Right ventricle myocardium inferior (tissue), 1 donor: ENCODE measurements at regions of chr12 and their contacts with region 1.

Region 1: GRCh38 chr12:51814311-51815088 is 34.0 kb downstream of the FIGNL2 start:
- DNase-seq: peak; percentile 93
- ATAC-seq: peak; percentile 88

Region 2: DNA sequence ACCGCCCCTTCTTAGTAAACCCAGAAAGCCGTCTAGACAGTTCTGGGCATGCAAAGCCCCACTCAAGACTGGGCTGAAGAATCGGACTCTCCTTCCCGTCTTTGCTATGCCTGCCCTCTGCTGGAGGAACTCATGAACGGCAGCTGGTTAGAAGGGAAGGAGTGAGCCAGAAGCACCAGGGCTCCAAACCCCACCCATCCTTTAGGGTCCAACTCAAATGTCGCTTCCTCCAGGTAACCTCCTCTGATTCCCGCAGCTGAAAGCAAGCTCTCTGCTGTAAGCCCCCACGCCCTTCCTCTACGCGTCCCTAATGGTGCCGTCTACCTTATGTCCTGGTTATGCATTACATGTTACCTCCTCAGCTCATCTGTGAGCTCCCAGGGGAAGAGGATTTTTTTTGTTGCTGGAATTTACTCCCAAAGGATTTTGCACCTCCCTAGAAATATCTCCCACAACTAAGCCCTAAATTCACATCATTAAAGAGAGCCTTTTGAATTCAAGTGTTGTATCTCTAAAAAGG is 282.5 kb before region 1 on chr12:
- intact Hi-C with region 1: loop called (anchors 10 kb)
- DNase-seq: no peak
- ATAC-seq: peak; percentile 83

Region 3: GRCh38 chr12:51954561-51955361 is 140.3 kb after region 1 on chr12:
- intact Hi-C with region 1: no loop called
- DNase-seq: no peak
- ATAC-seq: no peak